Ovary (tissue), 10 donors: ENCODE measurements at regions of chr9 and their contacts with region 1.

Region 1: GRCh38 chr9:122810306-122810946 is 10.5 kb downstream of the OR1K1 start:
- DNase-seq: peak; percentile 44 to 81 (median 74)
- H3K4me3 ChIP-seq: no peak overlapping the region
- H3K27ac ChIP-seq: no peak overlapping the region
- H3K4me1 ChIP-seq: no peaks in the 10 kb centered on the region
- H3K27me3 ChIP-seq: no peaks in the 10 kb centered on the region
- CTCF ChIP-seq: peak in 2 of 3 donors; percentile 72 to 78
- EP300 ChIP-seq: no peak
- POLR2A ChIP-seq: no peak

Region 2: GRCh38 chr9:122125158-122125508 is 685.3 kb before region 1 on chr9:
- intact Hi-C with region 1: loop called in 1 of 4 experiments (anchors 10 kb)
- DNase-seq: peak; percentile 67 to 88 (median 80)
- H3K4me3 ChIP-seq: no peak overlapping the region
- H3K27ac ChIP-seq: no peak overlapping the region
- H3K4me1 ChIP-seq: no peaks in the 10 kb centered on the region
- H3K27me3 ChIP-seq: no peaks in the 10 kb centered on the region
- CTCF ChIP-seq: peak; percentile 73 to 84 (median 82)
- EP300 ChIP-seq: no peak
- POLR2A ChIP-seq: no peak

Region 3: GRCh38 chr9:122477346-122477745 is 333.1 kb before region 1 on chr9:
- intact Hi-C with region 1: loop called in 1 of 4 experiments (anchors 10 kb)
- DNase-seq: no peak
- H3K4me3 ChIP-seq: no peak overlapping the region
- H3K27ac ChIP-seq: no peak overlapping the region
- H3K4me1 ChIP-seq: no peaks in the 10 kb centered on the region
- H3K27me3 ChIP-seq: no peaks in the 10 kb centered on the region
- CTCF ChIP-seq: no peak
- EP300 ChIP-seq: no peak
- POLR2A ChIP-seq: no peak

Region 4: GRCh38 chr9:122723690-122724089 is 86.7 kb before region 1 on chr9 and contains the start of gene OR1L4:
- intact Hi-C with region 1: no loop called
- DNase-seq: no peak
- H3K4me3 ChIP-seq: no peak within 1 kb of the TSS
- H3K27ac ChIP-seq: no peak within 1 kb of the TSS
- H3K4me1 ChIP-seq: no peaks in the 10 kb centered on the region
- H3K27me3 ChIP-seq: no peaks in the 10 kb centered on the region
- CTCF ChIP-seq: no peak
- EP300 ChIP-seq: no peak
- POLR2A ChIP-seq: no peak
- total RNA-seq, gene OR1L4: not detected